Adrenal gland (tissue), 19 donors: ENCODE measurements at regions of chr7 and their contacts with region 1.

Region 1: GRCh38 chr7:105402221-105403095 is 13.7 kb upstream of the SRPK2 start:
- DNase-seq: no peak
- H3K4me3 ChIP-seq: no peak overlapping the region
- H3K27ac ChIP-seq: no peak overlapping the region
- H3K4me1 ChIP-seq: peaks cover 7 to 8% of the 10 kb centered on the region in 2 donors
- H3K27me3 ChIP-seq: no peaks in the 10 kb centered on the region
- CTCF ChIP-seq: no peak
- POLR2A ChIP-seq: no peak

Region 2: GRCh38 chr7:105084581-105084980 is 317.9 kb before region 1 on chr7:
- intact Hi-C with region 1: no loop called
- DNase-seq: no peak
- H3K4me3 ChIP-seq: no peak overlapping the region
- H3K27ac ChIP-seq: no peak overlapping the region
- H3K4me1 ChIP-seq: no peaks in the 10 kb centered on the region
- H3K27me3 ChIP-seq: no peaks in the 10 kb centered on the region
- CTCF ChIP-seq: no peak
- POLR2A ChIP-seq: no peak

Region 3: DNA sequence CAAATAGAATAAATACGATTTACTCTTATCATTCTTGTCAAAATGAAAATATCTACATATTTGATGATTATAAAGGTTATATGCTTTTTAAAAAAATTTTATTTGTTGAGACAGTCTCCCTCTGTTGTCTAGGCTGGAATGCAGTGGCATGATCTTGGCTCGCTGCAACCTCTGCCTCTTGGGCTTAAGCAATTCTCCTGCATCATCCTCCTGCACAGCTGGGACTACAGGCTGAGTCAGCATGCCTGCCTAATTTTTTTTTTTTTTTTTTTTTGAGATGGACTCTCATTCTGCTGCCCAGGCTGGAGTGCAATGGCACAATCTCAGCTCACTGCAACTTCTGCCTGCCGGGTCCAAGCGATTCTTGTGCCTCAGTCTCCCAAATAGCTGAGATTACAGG is 70.7 kb after region 1 on chr7:
- intact Hi-C with region 1: loop called in 1 of 2 experiments (anchors 10 kb)
- DNase-seq: peak; percentile 38 to 78 (median 70)
- H3K4me3 ChIP-seq: no peak overlapping the region
- H3K27ac ChIP-seq: no peak overlapping the region
- H3K4me1 ChIP-seq: no peaks in the 10 kb centered on the region
- H3K27me3 ChIP-seq: no peaks in the 10 kb centered on the region
- CTCF ChIP-seq: no peak
- POLR2A ChIP-seq: no peak

Region 4: DNA sequence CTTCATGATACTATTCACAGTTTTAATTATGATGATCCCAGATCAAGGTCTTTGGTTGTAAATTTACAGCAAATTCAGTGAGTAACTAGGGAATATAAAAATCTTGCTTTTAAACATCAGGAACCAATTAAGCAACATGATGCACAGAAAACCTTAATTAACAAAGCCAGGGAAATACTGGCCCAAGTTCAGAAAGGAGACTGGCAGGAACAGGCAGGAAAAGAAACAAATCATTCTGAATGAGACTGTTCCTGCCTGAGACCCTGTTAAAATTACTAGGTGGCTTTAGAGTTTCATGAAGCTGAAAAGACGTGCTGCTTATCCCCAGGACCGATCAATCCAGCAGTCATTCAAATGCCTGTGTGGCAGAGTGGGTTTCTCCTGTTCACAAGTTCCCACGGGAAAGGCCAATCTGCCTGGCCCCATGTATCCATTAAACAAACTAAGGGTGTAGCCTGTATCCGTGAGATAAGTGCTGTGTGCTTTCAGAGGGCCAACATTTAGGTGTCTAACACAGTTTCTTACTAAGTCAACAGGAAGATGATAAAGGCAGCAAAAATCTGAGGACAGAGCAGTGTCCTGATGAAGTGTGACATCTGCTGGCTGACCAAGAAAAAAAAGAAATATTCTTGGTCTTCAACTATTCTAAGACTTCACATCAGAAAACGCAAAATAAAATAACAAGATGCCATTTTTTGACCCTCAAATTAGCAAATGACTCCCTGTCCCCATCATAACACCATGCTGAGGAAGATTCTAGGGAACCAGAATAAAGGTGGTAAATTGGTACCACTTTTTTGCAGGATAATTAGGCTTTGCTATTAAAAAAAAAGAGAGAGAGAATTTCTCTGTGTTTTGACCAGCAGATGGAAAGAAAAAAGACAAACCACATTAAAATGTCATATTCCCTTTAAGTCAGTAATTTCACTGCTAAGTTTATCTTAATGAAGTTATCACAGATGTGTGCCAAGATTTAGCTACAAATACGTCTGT is 85.4 kb after region 1 on chr7:
- intact Hi-C with region 1: loop called in 1 of 2 experiments (anchors 10 kb)
- DNase-seq: peak in 1 of 7 donors; percentile 5
- H3K4me3 ChIP-seq: no peak overlapping the region
- H3K27ac ChIP-seq: no peak overlapping the region
- H3K4me1 ChIP-seq: no peaks in the 10 kb centered on the region
- H3K27me3 ChIP-seq: no peaks in the 10 kb centered on the region
- CTCF ChIP-seq: peak; percentile 19 to 51 (median 44)
- POLR2A ChIP-seq: no peak

Region 5: DNA sequence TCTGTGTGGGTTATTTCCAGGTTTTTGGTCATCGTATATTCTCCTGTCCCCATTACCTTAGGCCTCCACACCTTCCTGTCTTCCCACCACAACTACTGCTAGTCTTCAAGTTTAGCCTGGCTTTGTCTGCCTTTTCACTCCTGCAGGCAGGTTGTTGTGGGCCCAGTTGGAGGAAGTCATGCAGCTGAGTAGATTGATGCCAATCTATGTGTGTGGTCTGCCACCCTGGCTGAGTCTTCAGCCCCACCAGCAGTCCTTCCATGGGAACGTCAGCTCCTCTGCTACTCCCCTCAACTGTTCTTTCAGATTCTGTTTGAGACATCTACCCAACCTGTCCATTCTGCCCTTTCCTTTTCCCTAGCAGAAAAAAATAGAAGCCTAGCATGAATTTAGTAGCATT is 135.9 kb after region 1 on chr7:
- intact Hi-C with region 1: no loop called
- DNase-seq: no peak
- H3K4me3 ChIP-seq: no peak overlapping the region
- H3K27ac ChIP-seq: no peak overlapping the region
- H3K4me1 ChIP-seq: peaks cover 1 to 7% of the 10 kb centered on the region in 2 donors
- H3K27me3 ChIP-seq: no peaks in the 10 kb centered on the region
- CTCF ChIP-seq: no peak
- POLR2A ChIP-seq: no peak